Sigmoid colon (tissue), 7 donors: ENCODE measurements at regions of chr16 and their contacts with region 1.

Region 1: DNA sequence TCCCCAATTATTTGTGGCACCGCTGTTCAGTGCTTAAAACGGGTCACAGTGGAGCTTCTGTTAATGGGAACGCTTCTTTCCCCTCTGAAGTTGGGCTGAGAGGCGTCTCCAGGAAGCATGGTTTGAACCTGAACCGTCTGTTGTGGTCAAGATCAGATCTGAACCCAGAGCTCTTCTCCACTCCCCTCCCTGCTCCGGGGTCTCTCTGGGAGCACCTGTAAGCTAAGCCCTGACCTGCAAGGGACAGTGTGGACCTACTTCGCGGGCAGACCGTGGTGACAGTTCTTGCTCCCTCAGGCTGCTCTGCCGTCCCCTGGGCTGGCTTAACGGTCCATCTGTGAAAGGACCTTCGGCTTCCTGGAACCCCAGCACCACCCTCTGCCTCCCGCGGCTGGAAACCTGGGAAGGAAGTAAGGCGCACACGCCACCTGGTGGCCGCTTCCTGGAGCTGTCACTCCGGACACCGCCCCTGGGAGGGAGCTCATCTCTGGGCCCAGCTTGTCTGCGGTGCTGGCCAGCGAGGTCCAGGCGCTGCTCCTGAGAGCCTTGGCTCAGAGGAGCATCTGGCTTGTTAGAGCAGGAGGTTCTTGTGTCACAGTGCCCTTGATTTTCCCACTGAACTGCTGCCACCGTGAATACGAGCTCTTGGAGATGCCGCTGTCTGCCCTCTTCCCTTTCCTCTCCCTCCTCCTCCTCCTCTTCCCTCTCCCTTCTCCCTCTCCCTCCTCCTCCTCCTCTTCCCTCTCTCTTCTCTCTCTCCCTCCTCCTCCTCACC is 518.5 kb upstream of the EEF2KMT start:
- DNase-seq: peak; percentile 66
- H3K4me3 ChIP-seq: no peak overlapping the region
- H3K27ac ChIP-seq: no peak overlapping the region
- H3K4me1 ChIP-seq: no peaks in the 10 kb centered on the region
- H3K27me3 ChIP-seq: peaks cover 3 to 32% (median 8%) of the 10 kb centered on the region in 3 donors
- CTCF ChIP-seq: peak in 3 of 4 experiments; percentile 54 to 62 (median 58)
- EP300 ChIP-seq: no peak
- POLR2A ChIP-seq: no peak

Region 2: GRCh38 chr16:5234295-5235050 is 381.6 kb before region 1 on chr16:
- intact Hi-C with region 1: loop called (anchors 5 kb)
- DNase-seq: peak; percentile 22
- H3K4me3 ChIP-seq: no peak overlapping the region
- H3K27ac ChIP-seq: no peak overlapping the region
- H3K4me1 ChIP-seq: no peaks in the 10 kb centered on the region
- H3K27me3 ChIP-seq: peaks cover 0 to 6% (median 0%) of the 10 kb centered on the region in 3 donors
- CTCF ChIP-seq: no peak
- EP300 ChIP-seq: no peak
- POLR2A ChIP-seq: no peak

Region 3: DNA sequence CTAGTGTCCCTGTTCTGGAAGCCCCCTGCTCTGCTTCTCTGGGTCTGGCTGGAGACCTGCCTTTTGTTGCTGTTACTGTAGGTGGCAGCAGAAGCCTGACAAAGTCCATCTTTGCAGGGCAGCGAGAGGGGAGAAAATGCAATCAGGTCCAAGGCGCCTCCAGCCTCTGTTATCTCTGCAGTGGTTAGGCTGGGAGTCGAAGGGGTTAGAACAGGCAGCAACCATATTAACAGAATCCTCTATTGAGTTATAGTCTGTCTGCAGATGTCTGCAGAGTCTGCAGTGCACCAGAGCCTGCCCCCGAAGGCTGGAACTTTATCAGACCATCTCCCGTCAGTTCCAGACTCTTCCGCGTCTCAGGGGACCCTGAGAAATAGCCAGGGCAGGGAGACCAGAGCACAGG is 113.6 kb before region 1 on chr16:
- intact Hi-C with region 1: loop called (anchors 5 kb)
- DNase-seq: no peak
- H3K4me3 ChIP-seq: no peak overlapping the region
- H3K27ac ChIP-seq: no peak overlapping the region
- H3K4me1 ChIP-seq: peaks cover 0 to 20% (median 13%) of the 10 kb centered on the region in 4 donors
- H3K27me3 ChIP-seq: no peaks in the 10 kb centered on the region
- CTCF ChIP-seq: peak in 1 of 4 experiments; percentile 34
- EP300 ChIP-seq: no peak
- POLR2A ChIP-seq: no peak